Calu3 (cell line): ENCODE measurements at regions of chrX and their contacts with region 1.

Region 1: GRCh38 chrX:154980330-154981096 is 42.0 kb downstream of the F8 start:
- DNase-seq: peak; percentile 78
- H3K4me3 Mint-ChIP-seq: peak overlapping the region; percentile 61
- H3K27ac Mint-ChIP-seq: peak overlapping the region; percentile 50
- H3K4me1 Mint-ChIP-seq: peaks cover 10% of the 10 kb centered on the region
- H3K27me3 Mint-ChIP-seq: no peaks in the 10 kb centered on the region
- CTCF ChIP-seq: peak; percentile 57

Region 2: GRCh38 chrX:154918060-154918483 is 62.4 kb before region 1 on chrX:
- CTCF ChIA-PET with region 1: interaction called, 7 read pairs
- intact Hi-C with region 1: loop called (anchors 5 kb)
- DNase-seq: peak; percentile 45
- H3K4me3 Mint-ChIP-seq: peak overlapping the region; percentile 33
- H3K27ac Mint-ChIP-seq: no peak overlapping the region
- H3K4me1 Mint-ChIP-seq: peaks cover 8% of the 10 kb centered on the region
- H3K27me3 Mint-ChIP-seq: no peaks in the 10 kb centered on the region
- CTCF ChIP-seq: peak; percentile 73

Region 3: GRCh38 chrX:155026726-155027508 is 46.4 kb after region 1 on chrX and contains the start of gene FUNDC2:
- CTCF ChIA-PET with region 1: no interaction called
- intact Hi-C with region 1: loop called (anchors 5 kb)
- DNase-seq: peak; percentile 93
- H3K4me3 Mint-ChIP-seq: peak within 1 kb of the TSS; percentile 72
- H3K27ac Mint-ChIP-seq: peak within 1 kb of the TSS; percentile 84
- H3K4me1 Mint-ChIP-seq: peaks cover 20% of the 10 kb centered on the region
- H3K27me3 Mint-ChIP-seq: no peaks in the 10 kb centered on the region
- CTCF ChIP-seq: no peak
- total RNA-seq, gene FUNDC2: 33.5 and 45.4 TPM in 2 replicates

Region 4: DNA sequence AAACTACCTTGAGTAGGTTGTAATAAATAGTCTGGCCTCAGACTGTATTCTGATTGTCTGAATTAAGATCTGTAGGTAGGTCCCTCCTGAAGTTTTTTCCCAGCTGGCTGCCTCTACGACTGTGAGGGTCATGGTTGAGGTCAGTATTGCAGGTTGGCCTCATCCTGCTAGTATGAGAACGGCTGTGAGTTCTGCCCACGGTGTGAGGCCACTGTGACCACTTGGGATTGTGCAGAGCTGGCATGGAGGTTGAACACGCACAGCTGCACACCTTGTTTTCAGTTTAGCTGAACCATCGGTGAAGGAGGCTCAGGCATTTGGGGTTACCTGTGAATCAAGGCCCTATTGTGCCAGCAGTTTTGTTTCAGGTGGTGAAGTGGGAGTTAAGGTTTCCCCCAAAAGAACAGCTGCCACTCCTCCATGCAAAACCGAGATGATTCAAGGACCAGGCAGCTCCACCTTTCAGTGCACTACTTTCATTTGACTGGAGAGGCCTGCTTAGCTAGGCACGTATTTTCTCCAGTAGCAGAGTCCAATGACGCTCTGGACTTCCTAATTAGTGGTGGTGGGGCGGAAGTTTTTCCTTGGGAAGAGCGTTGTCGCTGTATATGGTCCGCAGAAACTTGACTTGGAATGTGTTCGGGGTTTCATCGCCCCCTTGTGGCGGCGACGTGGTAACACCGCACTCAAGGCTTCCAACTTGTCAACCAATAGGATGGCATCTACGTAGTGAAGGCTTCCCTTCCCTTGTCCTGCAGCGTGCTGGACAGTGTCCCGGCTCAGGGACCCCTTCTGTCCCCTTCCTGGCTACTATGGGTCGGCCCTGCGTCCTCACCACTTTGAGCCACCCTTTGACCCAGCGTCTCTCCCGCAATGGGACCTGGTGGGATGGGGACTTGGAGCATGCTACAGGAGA is 76.6 kb after region 1 on chrX:
- CTCF ChIA-PET with region 1: no interaction called
- intact Hi-C with region 1: loop called (anchors 1 kb)
- DNase-seq: peak; percentile 69
- H3K4me3 Mint-ChIP-seq: peak overlapping the region; percentile 36
- H3K27ac Mint-ChIP-seq: no peak overlapping the region
- H3K4me1 Mint-ChIP-seq: peaks cover 15% of the 10 kb centered on the region
- H3K27me3 Mint-ChIP-seq: no peaks in the 10 kb centered on the region
- CTCF ChIP-seq: peak; percentile 61

Region 5: GRCh38 chrX:155144926-155145325 is 164.4 kb after region 1 on chrX:
- CTCF ChIA-PET with region 1: no interaction called
- intact Hi-C with region 1: no loop called
- DNase-seq: no peak
- H3K4me3 Mint-ChIP-seq: no peak overlapping the region
- H3K27ac Mint-ChIP-seq: no peak overlapping the region
- H3K4me1 Mint-ChIP-seq: no peaks in the 10 kb centered on the region
- H3K27me3 Mint-ChIP-seq: no peaks in the 10 kb centered on the region
- CTCF ChIP-seq: no peak

Region 6: DNA sequence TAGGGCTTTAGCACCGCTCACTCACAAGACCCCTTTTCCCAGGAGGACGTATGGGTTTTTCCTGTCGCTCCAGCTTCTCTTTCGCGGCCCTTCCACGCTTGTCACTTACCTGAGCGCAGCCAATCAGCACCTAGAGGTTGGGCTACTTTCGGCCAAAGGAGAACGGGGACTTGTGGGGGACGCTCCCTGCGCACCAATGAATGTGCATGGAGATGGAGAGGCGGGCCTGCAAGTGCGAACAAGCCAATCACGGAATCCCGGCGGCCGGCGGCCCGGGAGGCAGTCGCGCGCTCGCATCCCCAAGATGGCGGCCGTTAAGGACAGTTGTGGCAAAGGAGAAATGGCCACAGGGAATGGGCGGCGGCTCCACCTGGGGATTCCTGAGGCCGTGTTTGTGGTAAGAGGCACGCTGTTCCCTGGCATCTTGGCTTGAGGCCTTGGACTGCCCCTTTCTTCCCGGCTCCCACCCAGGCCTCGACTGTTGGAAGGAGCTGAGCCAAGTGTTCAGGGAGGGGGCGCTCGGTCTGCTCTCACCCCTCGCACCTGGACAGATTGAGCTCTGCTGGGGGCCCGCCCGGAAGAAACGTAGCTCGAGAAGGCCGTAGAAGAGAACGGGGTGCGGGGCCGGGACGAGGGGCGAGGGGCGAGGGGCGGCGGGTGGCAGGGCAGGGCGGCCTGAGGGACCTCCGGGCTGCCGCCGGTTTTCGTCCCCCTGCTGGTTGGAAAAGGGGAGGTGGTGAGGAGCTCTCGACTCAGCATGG is 235.8 kb after region 1 on chrX and contains the start of gene VBP1:
- CTCF ChIA-PET with region 1: no interaction called
- intact Hi-C with region 1: loop called (anchors 5 kb)
- DNase-seq: peak; percentile 91
- H3K4me3 Mint-ChIP-seq: peak within 1 kb of the TSS; percentile 84
- H3K27ac Mint-ChIP-seq: peak within 1 kb of the TSS; percentile 67
- H3K4me1 Mint-ChIP-seq: peaks cover 8% of the 10 kb centered on the region
- H3K27me3 Mint-ChIP-seq: no peaks in the 10 kb centered on the region
- CTCF ChIP-seq: peak; percentile 56
- total RNA-seq, gene VBP1: 56.3 and 58.1 TPM in 2 replicates